GM10248 (cell line): ENCODE measurements at regions of chr2 and their contacts with region 1.

Region 1: DNA sequence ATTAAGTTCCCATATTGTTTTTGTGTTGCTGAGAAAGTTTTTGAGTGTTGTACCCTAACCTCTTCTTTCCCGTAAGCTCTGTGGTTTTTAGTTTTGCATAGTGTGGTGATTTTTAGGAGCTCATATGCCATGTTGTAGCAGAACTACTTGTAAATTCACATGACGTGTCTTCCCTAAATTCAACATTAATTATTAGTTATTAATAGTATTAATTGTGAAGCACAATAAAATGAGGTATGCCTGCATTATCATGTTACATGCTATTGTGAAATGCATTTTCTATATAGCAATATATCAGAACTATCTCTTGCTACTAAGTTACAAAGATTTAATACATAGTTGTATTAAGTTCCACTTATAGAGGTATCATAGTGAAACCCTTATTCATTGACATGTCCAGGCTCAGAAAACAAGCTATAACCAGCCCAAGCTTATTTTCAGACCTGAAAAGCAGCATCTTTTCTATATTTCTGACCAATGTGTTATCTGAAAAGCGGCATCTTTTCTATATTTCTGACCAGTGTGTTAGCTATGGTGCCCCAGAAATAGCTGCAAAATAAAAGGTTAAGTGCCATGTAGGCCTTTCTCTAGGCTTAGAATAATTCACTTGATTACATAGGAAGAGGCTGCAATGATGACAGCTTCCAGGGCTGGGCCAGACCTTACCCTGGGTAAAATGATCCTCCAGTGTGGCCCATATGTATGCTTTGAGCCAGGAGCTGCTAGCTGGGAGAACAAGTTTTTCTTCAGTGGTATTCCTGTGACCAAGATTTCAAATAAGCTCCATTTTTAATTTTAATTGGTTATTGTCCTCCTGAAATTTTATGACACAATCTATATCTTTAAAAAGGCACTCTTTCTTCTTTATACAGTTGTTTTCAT is 21.6 kb downstream of the EPAS1 start:
- DNase-seq: no peak
- CTCF ChIP-seq: no peak

Region 2: GRCh38 chr2:46010925-46011490 is 307.8 kb before region 1 on chr2:
- CTCF ChIA-PET with region 1: no interaction called
- POLR2A ChIA-PET with region 1: no interaction called
- DNase-seq: peak; percentile 59
- CTCF ChIP-seq: peak; percentile 56

Region 3: GRCh38 chr2:46339667-46340459 is 21.0 kb after region 1 on chr2:
- CTCF ChIA-PET with region 1: interaction called, 11 read pairs
- POLR2A ChIA-PET with region 1: no interaction called
- DNase-seq: no peak
- CTCF ChIP-seq: no peak

Region 4: GRCh38 chr2:46780801-46781445 is 462.1 kb after region 1 on chr2:
- CTCF ChIA-PET with region 1: no interaction called
- POLR2A ChIA-PET with region 1: no interaction called
- DNase-seq: no peak
- CTCF ChIP-seq: no peak